Lower lobe of right lung (tissue), 2 donors: ENCODE measurements at regions of chr17 and their contacts with region 1.

Region 1: DNA sequence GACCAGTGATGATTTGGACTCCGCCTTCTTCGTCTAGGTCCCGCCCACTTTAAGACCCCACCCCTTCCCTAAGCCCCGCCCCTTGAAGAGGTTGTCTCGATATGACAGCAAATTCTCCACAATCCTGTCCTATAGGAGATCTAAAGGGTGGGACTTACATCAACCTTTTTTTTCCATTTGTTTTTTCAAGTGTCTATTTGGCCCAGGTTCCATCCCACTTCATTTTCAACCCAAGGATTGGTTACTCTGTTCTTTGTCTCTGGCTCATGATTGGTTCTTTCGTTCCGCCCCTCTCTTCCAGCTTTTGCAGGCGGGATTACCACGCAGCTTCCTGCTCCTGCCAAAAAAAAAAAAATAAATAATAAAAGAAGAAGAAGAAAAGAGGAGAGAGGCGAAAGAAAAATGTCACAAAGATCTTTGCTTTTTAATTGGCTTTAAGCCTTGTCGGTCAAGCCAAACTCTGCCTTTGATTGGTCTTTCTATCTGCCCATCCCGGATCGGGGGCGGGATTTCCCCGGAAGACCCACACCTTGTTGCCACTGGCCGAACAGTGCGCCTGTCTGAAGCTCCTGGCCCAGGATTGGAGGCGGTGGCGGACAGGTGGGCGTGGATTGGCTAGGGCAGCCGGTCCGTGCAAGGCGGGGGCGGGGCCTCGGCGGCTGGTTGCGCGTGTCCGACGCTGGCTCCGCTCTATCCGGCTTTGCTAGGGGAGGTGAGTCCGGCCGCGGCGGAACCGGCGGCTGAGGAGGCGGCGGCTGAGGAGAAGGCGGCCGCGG is 1.2 kb upstream of the NLK start:
- DNase-seq: peak; percentile 100
- ATAC-seq: peak; percentile 99
- H3K4me3 ChIP-seq: peak overlapping the region; percentile 89
- H3K27ac ChIP-seq: peak overlapping the region; percentile 87
- H3K4me1 ChIP-seq: peaks cover 35% of the 10 kb centered on the region
- H3K27me3 ChIP-seq: no peaks in the 10 kb centered on the region
- CTCF ChIP-seq: no peak

Region 2: DNA sequence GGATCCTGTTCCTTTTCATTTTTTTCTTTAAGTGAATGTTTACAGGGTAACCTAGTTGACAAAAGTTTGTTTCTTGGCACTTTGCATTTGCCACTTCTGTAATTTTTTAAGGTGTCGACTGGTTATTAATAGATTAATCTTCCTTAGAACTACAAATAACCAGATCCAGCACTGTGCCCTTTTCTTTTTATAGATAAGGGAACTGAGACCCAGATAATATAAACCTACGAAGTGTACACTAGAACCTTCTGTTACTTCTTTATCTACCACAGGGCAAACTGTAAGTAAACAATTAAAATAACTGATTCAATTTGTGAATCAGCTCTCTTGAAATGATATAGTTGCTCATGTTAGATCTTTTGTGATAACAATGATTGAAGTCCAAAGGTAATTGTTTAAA is 56.6 kb after region 1 on chr17:
- intact Hi-C with region 1: no loop called
- DNase-seq: no peak
- ATAC-seq: no peak
- H3K4me3 ChIP-seq: no peak overlapping the region
- H3K27ac ChIP-seq: no peak overlapping the region
- H3K4me1 ChIP-seq: no peaks in the 10 kb centered on the region
- H3K27me3 ChIP-seq: no peaks in the 10 kb centered on the region
- CTCF ChIP-seq: no peak

Region 3: DNA sequence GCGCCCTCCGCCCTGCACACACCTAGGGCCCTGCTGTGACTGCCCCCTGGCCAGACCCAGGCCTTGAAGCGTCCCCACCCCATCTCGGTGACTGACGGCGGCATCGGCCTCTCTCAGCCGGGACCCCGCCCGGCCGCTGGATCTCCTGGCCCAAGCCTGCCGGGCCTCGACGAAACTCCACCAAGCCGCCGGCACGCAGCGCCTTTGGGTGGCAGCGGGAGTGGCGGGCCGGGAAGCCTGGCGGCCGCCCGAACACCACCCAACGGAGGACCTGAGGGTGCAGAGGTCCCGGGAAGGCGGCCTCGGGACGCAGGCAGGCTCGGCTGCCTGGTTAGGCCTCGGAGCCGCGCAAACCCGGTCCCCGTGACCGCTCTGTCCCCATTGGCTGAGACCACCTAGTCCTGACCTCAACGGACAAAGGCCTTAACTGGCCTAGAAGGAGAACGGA is 265.7 kb after region 1 on chr17:
- intact Hi-C with region 1: loop called (anchors 10 kb)
- DNase-seq: no peak
- ATAC-seq: no peak
- H3K4me3 ChIP-seq: no peak overlapping the region
- H3K27ac ChIP-seq: no peak overlapping the region
- H3K4me1 ChIP-seq: no peaks in the 10 kb centered on the region
- H3K27me3 ChIP-seq: peaks cover 14% of the 10 kb centered on the region
- CTCF ChIP-seq: no peak